ENCODE measurements at regions of chr5 and their contacts with region 1.

Region 1: GRCh38 chr5:59390074-59390659 is 503.4 kb downstream of the PDE4D start:
- DNase-seq: no peak
- ATAC-seq: no peak
- H3K4me3 ChIP-seq: no peak overlapping the region
- H3K27ac ChIP-seq: no peak overlapping the region
- H3K4me1 ChIP-seq: no peaks in the 10 kb centered on the region
- H3K27me3 ChIP-seq: no peaks in the 10 kb centered on the region
- CTCF ChIP-seq: peak; percentile 27 to 58 (median 44); a peak in 5 of 6 replicates
- EP300 ChIP-seq: no peak
- POLR2A ChIP-seq: no peak
- RAD21 ChIP-seq: peak; percentile 52

Region 2: DNA sequence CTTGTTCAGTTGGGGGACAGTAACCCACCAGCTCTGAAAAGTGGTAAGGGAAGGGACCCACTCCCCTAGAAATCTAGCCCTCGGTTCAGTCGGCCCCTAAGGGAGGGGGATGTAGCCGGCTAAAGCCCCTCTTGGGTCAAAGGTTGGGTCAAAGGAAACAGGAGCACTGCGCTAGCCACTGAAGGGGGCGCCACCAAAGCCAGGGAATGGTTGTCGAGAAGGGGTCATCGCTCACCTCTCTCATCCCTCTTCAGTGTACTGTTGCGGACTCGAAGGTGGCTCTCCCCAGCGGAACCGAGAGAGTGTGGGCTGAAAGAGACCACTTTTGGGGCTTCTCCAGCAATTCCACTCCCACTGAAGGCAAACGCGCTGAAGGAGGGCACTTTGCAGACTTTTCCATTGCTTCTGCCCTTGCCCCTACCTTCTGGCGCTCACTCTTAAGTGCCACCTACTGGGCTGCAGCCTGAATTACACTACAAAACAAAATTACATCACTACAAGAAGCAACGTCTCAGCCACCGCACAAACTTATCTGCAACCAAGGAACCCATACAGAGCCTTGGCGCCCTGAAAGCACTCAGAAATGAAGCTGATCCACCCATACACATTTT is 106.5 kb after region 1 on chr5:
- CTCF ChIA-PET with region 1: interaction called, 22 read pairs
- POLR2A ChIA-PET with region 1: no interaction called
- RAD21 ChIA-PET with region 1: no interaction called
- SMC1A ChIA-PET with region 1: interaction called, 3 read pairs
- in situ Hi-C with region 1: no loop called
- intact Hi-C with region 1: loop called (anchors 2 kb)
- DNase-seq: no peak
- ATAC-seq: peak; percentile 83
- H3K4me3 ChIP-seq: no peak overlapping the region
- H3K27ac ChIP-seq: no peak overlapping the region
- H3K4me1 ChIP-seq: no peaks in the 10 kb centered on the region
- H3K27me3 ChIP-seq: no peaks in the 10 kb centered on the region
- CTCF ChIP-seq: peak; percentile 41 to 58 (median 52)
- EP300 ChIP-seq: no peak
- POLR2A ChIP-seq: no peak
- RAD21 ChIP-seq: no peak

Region 3: GRCh38 chr5:59660737-59661136 is 270.6 kb after region 1 on chr5:
- CTCF ChIA-PET with region 1: interaction called, 29 read pairs
- POLR2A ChIA-PET with region 1: no interaction called
- RAD21 ChIA-PET with region 1: interaction called, 5 read pairs
- SMC1A ChIA-PET with region 1: interaction called, 18 read pairs
- in situ Hi-C with region 1: no loop called
- intact Hi-C with region 1: no loop called
- DNase-seq: no peak
- ATAC-seq: peak; percentile 77
- H3K4me3 ChIP-seq: no peak overlapping the region
- H3K27ac ChIP-seq: no peak overlapping the region
- H3K4me1 ChIP-seq: no peaks in the 10 kb centered on the region
- H3K27me3 ChIP-seq: no peaks in the 10 kb centered on the region
- CTCF ChIP-seq: peak; percentile 25 to 57 (median 42); a peak in 3 of 6 replicates
- EP300 ChIP-seq: no peak
- POLR2A ChIP-seq: no peak
- RAD21 ChIP-seq: peak; percentile 70

Region 4: DNA sequence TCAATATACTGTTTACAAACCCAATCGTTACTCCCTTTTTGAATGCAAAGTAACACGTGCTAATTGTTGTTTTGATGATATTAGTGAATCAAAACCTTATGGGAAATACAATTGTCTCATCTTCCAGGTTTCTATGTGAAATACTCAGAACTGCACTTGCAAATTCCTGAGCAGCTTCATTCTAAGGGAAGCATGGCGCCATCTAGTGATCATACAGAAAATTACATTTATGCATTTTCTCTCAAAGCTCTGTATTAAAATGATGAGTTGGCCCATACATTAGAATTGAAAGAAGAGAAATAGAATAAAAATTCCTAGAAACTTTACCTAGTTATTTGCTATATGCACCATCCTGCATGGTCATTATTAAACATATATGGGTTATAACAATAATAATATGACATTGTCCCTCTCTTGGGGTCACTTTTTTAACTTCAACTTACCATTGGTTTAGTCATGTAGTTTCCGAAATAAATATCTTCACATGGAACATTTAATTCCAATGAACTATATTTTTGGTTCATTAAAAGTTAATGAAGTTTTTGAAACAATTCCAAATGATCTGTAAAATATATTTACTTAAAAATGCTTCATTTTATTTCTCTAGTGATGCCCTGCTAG is 283.4 kb after region 1 on chr5:
- CTCF ChIA-PET with region 1: interaction called, 78 read pairs
- POLR2A ChIA-PET with region 1: no interaction called
- RAD21 ChIA-PET with region 1: interaction called, 7 read pairs
- SMC1A ChIA-PET with region 1: interaction called, 23 read pairs
- in situ Hi-C with region 1: loop called (anchors 5 kb)
- intact Hi-C with region 1: loop called (anchors 1 kb)
- DNase-seq: no peak
- ATAC-seq: peak; percentile 60
- H3K4me3 ChIP-seq: no peak overlapping the region
- H3K27ac ChIP-seq: no peak overlapping the region
- H3K4me1 ChIP-seq: no peaks in the 10 kb centered on the region
- H3K27me3 ChIP-seq: no peaks in the 10 kb centered on the region
- CTCF ChIP-seq: peak; percentile 54 to 76 (median 65); a peak in 5 of 6 replicates
- EP300 ChIP-seq: no peak
- POLR2A ChIP-seq: no peak
- RAD21 ChIP-seq: peak; percentile 90

Region 5: DNA sequence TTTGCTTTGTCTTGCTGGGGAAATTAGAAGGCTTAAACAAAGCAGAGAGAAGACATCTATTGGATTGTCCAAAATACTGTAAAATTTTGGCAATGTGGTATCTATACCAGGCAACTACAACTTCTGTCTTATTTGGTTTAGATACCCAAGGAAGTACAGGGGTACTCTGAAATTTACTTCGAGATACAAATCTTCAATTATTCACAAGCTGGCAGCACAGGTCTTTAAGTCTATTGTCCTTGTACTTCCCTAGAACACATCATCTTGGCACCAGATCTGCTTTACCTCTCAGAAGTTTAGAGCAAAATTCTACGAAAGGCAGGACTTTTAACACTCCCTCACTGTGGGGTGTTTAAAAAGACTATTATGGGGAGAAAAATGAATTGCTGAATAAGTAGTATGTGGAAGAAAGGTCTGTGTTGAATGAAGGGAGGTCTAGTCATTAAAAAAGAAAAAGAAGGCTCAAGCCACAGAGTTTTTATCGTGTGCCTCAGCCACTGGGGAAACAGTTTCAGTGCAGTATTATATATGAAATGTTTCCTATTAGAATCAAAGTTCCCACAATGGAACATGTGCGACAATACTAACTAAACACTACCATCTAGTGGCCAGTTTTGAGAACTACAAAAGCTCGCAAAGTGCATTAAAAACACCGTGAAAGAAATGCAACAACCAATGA is 409.6 kb after region 1 on chr5:
- CTCF ChIA-PET with region 1: interaction called, 39 read pairs
- POLR2A ChIA-PET with region 1: no interaction called
- RAD21 ChIA-PET with region 1: interaction called, 3 read pairs
- SMC1A ChIA-PET with region 1: interaction called, 18 read pairs
- in situ Hi-C with region 1: loop called (anchors 5 kb)
- intact Hi-C with region 1: loop called (anchors 1 kb)
- DNase-seq: peak; percentile 24
- ATAC-seq: peak; percentile 79
- H3K4me3 ChIP-seq: no peak overlapping the region; the same call in 1 of the 2 replicates
- H3K27ac ChIP-seq: no peak overlapping the region
- H3K4me1 ChIP-seq: peaks cover 11% of the 10 kb centered on the region; the same call in 1 of the 2 replicates
- H3K27me3 ChIP-seq: no peaks in the 10 kb centered on the region
- CTCF ChIP-seq: peak; percentile 41 to 71 (median 58); a peak in 5 of 6 replicates
- EP300 ChIP-seq: no peak
- POLR2A ChIP-seq: no peak
- RAD21 ChIP-seq: peak; percentile 82